Panc1 (cell line): ENCODE measurements at regions of chr12 and their contacts with region 1.

Region 1: DNA sequence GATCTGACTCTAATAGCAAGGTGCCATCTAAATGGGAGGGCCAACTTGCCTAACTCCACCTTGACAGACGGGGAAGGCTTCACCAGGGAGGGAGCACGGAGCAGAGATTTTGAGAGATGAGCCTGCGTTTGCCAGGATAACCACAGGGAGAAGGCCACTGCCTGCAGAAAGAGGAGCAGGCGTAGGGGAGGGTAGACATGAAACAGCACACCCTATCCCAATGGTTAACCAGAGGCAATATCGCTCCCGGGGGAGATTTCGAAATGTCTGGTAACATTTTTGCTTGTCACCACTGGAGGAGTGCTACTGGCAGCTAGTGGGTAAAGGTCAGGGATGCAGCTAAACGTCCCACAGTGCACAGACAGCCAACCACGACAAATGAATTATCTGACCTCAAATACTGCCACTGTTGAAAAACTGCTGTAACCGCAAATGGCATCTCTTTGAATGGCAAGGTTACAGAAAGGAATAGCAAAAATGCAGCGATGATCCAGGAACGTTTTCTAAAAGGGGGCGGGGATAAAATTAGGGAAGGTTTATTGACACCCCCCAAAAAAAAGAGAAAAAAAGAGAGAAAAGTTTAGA is 126.0 kb upstream of the ATF7IP start:
- DNase-seq: no peak
- ATAC-seq: peak; percentile 87
- H3K4me3 ChIP-seq: peak overlapping the region; percentile 35 to 64
- H3K27ac ChIP-seq: peak overlapping the region; percentile 86
- H3K4me1 ChIP-seq: peaks cover 5% of the 10 kb centered on the region
- H3K27me3 ChIP-seq: no peaks in the 10 kb centered on the region
- CTCF ChIP-seq: 0 out of 2 replicates have a peak, but pooled peaks have one; percentile 26

Region 2: GRCh38 chr12:14454098-14454907 is 214.9 kb after region 1 on chr12:
- CTCF ChIA-PET with region 1: interaction called, 3 read pairs
- POLR2A ChIA-PET with region 1: no interaction called
- in situ Hi-C with region 1: no loop called
- intact Hi-C with region 1: loop called (anchors 5 kb)
- DNase-seq: peak; percentile 45
- ATAC-seq: peak; percentile 78; the same call in 1 of the 2 replicates
- H3K4me3 ChIP-seq: no peak overlapping the region
- H3K27ac ChIP-seq: no peak overlapping the region
- H3K4me1 ChIP-seq: no peaks in the 10 kb centered on the region
- H3K27me3 ChIP-seq: no peaks in the 10 kb centered on the region
- CTCF ChIP-seq: peak; percentile 86

Region 3: DNA sequence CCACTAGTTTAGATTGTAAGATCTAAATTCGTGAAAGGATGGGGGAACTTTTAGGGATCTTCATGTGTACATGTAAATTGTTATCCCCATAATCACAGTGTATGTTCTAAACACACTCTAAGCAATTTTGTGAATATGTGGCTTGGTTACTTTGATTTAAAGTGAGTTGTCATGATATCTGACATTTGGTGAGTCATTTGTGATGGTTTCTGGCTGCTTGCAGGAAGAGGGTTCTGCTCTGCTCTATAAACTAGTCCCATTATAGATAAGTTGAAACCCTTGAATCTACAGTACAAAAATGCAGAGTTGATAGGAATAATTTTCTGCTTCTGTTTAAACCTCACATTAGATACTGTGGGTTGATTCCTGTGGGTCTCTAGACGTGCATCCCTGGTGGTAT is 442.2 kb after region 1 on chr12:
- CTCF ChIA-PET with region 1: no interaction called
- POLR2A ChIA-PET with region 1: no interaction called
- in situ Hi-C with region 1: no loop called
- intact Hi-C with region 1: no loop called
- DNase-seq: no peak
- ATAC-seq: no peak
- H3K4me3 ChIP-seq: no peak overlapping the region
- H3K27ac ChIP-seq: no peak overlapping the region
- H3K4me1 ChIP-seq: no peaks in the 10 kb centered on the region
- H3K27me3 ChIP-seq: peaks cover 5% of the 10 kb centered on the region
- CTCF ChIP-seq: no peak